ENCODE measurements at regions of chr14 and their contacts with region 1.

Region 1: GRCh38 chr14:105398044-105398725 is at the start of gene TEX22:
- DNase-seq: peak; percentile 75 to 94 (median 86)
- ATAC-seq: peak; percentile 91
- H3K4me3 ChIP-seq: peak within 1 kb of the TSS; percentile 71
- H3K4me3 Mint-ChIP-seq: peak within 1 kb of the TSS; percentile 80
- H3K27ac ChIP-seq: peak within 1 kb of the TSS; percentile 44 to 65
- H3K27ac Mint-ChIP-seq: peak within 1 kb of the TSS; percentile 72
- H3K4me1 ChIP-seq: peaks cover 30% of the 10 kb centered on the region
- H3K4me1 Mint-ChIP-seq: peaks cover 16% of the 10 kb centered on the region
- H3K27me3 ChIP-seq: no peaks in the 10 kb centered on the region
- H3K27me3 Mint-ChIP-seq: no peaks in the 10 kb centered on the region
- CTCF ChIP-seq: no peak
- total RNA-seq, gene TEX22: 1.3 to 2.8 TPM

Region 2: GRCh38 chr14:105414456-105415371 is 16.5 kb after region 1 on chr14:
- CTCF ChIA-PET with region 1: no interaction called
- POLR2A ChIA-PET with region 1: interaction called, 3 read pairs
- intact Hi-C with region 1: loop called in 1 of 2 experiments (anchors 1 kb)
- DNase-seq: peak in 13 of 14 experiments; percentile 22 to 83 (median 50)
- ATAC-seq: peak; percentile 83
- H3K4me3 ChIP-seq: peak overlapping the region; percentile 30
- H3K4me3 Mint-ChIP-seq: peak overlapping the region; percentile 83
- H3K27ac ChIP-seq: no peak overlapping the region
- H3K27ac Mint-ChIP-seq: no peak overlapping the region
- H3K4me1 ChIP-seq: peaks cover 36% of the 10 kb centered on the region
- H3K4me1 Mint-ChIP-seq: peaks cover 23% of the 10 kb centered on the region
- H3K27me3 ChIP-seq: peaks cover 23 to 30% of the 10 kb centered on the region in 2 experiments
- H3K27me3 Mint-ChIP-seq: peaks cover 11% of the 10 kb centered on the region
- CTCF ChIP-seq: peak; percentile 82